Psoas muscle (tissue), 8 donors: ENCODE measurements at regions of chr12 and their contacts with region 1.

Region 1: GRCh38 chr12:71626098-71626497 is 37.5 kb downstream of the ZFC3H1 start:
- DNase-seq: no peak
- ATAC-seq: no peak
- H3K4me3 ChIP-seq: no peak overlapping the region
- H3K27ac ChIP-seq: no peak overlapping the region
- H3K4me1 ChIP-seq: peaks cover 3% of the 10 kb centered on the region
- H3K27me3 ChIP-seq: no peaks in the 10 kb centered on the region
- CTCF ChIP-seq: no peak

Region 2: DNA sequence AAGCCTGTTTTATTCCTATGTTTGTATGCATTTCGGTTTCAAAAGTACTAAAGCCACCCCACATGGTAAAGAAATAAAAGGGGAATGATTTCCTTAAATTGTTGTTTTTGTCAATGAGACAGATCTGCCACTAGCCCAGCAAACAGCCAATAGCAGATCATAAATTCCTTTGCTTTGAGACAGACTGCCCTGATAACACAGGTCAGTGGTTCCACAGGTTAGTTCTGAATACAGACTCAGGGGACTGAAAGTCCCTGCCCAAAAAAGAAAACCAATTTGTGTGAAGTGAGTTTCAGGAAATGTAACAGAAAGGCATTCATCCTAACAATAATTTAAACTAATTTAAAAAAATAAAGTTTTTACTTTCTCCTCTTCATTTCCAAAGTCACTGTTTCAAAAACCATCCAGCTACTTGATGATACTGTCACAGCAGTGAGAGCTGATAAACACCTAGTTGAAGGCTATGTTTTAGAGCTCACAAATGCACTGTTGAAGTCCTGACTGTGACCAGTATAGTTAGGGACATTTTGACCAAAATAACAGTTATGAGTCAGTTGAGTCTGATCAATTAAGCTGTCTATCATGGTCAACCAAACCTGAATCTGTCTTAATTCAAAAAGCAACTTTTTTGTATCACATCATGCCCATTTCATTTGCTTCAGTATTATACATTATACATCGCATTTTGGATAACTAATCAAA is 108.8 kb before region 1 on chr12:
- intact Hi-C with region 1: no loop called
- DNase-seq: no peak
- ATAC-seq: no peak
- H3K4me3 ChIP-seq: no peak overlapping the region
- H3K27ac ChIP-seq: no peak overlapping the region
- H3K4me1 ChIP-seq: no peaks in the 10 kb centered on the region
- H3K27me3 ChIP-seq: no peaks in the 10 kb centered on the region
- CTCF ChIP-seq: no peak

Region 3: DNA sequence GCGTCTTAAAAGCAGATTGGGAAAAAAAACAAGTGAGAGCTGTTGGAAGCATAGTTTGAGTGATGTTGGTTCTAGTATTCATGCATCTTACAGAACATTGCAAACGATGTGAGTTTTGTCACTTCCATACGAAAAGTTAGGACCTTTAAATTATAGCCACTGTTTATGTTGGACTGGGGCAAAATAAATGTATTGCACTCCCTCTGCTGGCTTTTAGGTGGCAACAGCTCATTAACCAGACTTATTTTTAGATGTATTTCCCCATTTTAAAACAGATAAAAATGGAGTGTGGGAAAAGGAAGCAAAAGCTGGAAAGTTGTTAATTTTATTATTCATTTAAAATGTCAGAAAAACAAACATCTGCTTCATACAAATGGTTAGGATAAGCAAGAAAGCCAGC is 74.6 kb before region 1 on chr12:
- intact Hi-C with region 1: no loop called
- DNase-seq: no peak
- ATAC-seq: no peak
- H3K4me3 ChIP-seq: no peak overlapping the region
- H3K27ac ChIP-seq: no peak overlapping the region
- H3K4me1 ChIP-seq: no peaks in the 10 kb centered on the region
- H3K27me3 ChIP-seq: no peaks in the 10 kb centered on the region
- CTCF ChIP-seq: peak; percentile 30

Region 4: DNA sequence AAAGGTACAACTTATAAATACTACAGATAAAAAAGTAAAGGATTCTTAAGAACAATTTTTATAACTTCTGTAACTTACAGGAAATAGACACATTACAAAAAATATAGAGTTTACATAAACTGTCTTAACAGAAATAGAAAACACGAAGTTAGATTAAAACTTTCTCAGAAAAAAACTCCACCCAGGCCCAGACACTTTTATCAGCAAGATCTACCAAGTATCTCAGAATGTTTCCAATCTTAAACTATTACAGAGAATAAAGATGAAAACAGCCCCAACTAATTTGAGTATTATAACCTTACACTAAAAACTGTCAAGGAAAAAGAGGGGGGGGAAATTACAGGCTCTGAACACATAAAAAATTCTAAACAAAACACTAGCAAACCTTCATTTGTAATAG is 29.4 kb after region 1 on chr12:
- intact Hi-C with region 1: loop called in 1 of 2 experiments (anchors 5 kb)
- DNase-seq: no peak
- ATAC-seq: no peak
- H3K4me3 ChIP-seq: no peak overlapping the region
- H3K27ac ChIP-seq: no peak overlapping the region
- H3K4me1 ChIP-seq: peaks cover 10% of the 10 kb centered on the region
- H3K27me3 ChIP-seq: no peaks in the 10 kb centered on the region
- CTCF ChIP-seq: no peak

Region 5: DNA sequence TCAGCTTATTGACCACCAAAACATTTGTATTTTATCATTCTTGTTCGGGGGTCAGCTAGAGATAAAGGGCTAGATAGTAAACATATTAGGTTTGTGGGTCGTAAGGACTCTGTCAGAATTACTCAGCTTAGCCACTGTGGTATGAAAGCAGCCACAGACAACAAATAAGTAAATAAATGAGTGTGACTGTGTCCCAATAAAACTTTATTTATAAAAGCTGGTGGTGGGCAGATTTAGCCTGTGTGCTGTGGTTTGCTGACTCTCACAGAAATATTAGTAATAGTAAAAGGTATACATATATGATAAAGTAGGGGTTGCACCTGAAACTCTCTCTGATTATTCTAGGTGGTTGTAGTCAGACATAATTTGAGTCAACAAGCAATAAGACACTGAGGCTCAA is 368.6 kb after region 1 on chr12:
- intact Hi-C with region 1: no loop called
- DNase-seq: no peak
- ATAC-seq: no peak
- H3K4me3 ChIP-seq: no peak overlapping the region
- H3K27ac ChIP-seq: no peak overlapping the region
- H3K4me1 ChIP-seq: no peaks in the 10 kb centered on the region
- H3K27me3 ChIP-seq: peaks cover 0 to 3% (median 0%) of the 10 kb centered on the region in 3 donors
- CTCF ChIP-seq: no peak